Breast epithelium (tissue), 4 donors: ENCODE measurements at regions of chr1 and their contacts with region 1.

Region 1: GRCh38 chr1:221089803-221090202 is 210.6 kb downstream of the HLX start:
- DNase-seq: no peak
- H3K4me3 ChIP-seq: no peak overlapping the region
- H3K27ac ChIP-seq: no peak overlapping the region
- H3K4me1 ChIP-seq: no peaks in the 10 kb centered on the region
- H3K27me3 ChIP-seq: no peaks in the 10 kb centered on the region
- CTCF ChIP-seq: no peak
- POLR2A ChIP-seq: no peak

Region 2: GRCh38 chr1:221074301-221074700 is 15.5 kb before region 1 on chr1:
- intact Hi-C with region 1: loop called (anchors 1 kb)
- DNase-seq: no peak
- H3K4me3 ChIP-seq: no peak overlapping the region
- H3K27ac ChIP-seq: no peak overlapping the region
- H3K4me1 ChIP-seq: no peaks in the 10 kb centered on the region
- H3K27me3 ChIP-seq: no peaks in the 10 kb centered on the region
- CTCF ChIP-seq: no peak
- POLR2A ChIP-seq: no peak